CD14-positive monocyte (primary cell): ENCODE measurements at regions of chr11 and their contacts with region 1.

Region 1: DNA sequence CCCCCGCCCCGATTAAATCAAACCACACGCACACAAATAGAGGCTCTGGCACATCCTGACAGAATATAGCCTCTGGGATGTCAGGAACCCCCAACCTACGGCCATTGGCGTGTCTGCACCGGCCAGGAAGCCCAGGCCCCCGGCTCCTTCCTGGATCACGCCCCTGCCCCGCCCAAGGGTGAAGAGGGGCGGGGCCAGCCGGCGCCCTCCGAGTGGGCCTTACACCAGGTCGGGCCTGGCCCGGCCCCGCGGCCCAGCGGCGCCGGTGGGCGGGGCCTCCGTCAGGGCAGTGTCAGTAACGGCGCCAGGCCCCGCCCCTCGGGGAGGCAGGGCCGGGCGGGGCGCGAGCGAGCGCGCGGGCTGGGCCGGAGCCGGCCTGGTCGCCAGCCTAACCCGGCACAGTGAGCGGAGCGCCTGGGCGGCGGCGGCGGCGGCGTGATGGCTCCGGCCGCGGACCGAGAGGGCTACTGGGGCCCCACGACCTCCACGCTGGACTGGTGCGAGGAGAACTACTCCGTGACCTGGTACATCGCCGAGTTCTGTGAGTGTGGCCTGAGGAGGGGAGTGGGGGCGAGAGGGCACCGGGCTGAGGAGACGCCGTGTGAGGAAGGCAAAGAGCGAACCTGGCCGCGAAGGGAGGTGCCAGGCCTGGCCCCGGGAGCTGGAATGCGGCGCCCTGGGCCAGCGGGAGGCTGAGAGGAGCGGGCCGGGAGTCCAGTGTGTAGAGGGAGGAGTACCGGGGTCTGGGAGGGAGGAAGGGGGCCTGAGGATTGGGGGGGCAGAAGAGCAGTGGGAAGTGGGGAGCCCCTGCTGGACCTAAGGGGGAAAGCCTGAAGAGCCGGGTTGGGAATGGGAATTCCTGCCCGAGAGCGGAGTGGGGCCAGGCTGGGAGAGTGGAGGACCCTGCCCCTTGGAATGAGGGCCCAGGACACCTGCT is at the start of gene ACER3:
- DNase-seq: peak; percentile 85 to 93 (median 89)
- H3K4me3 ChIP-seq: peak within 1 kb of the TSS; percentile 93 to 98 (median 97)
- H3K4me3 Mint-ChIP-seq: peak within 1 kb of the TSS; percentile 90 to 97
- H3K27ac ChIP-seq: peak within 1 kb of the TSS; percentile 88 to 93
- H3K27ac Mint-ChIP-seq: peak within 1 kb of the TSS; percentile 88 to 97 (median 96)
- H3K4me1 ChIP-seq: peaks cover 79 to 87% of the 10 kb centered on the region in 2 donors
- H3K4me1 Mint-ChIP-seq: peaks cover 73% of the 10 kb centered on the region
- H3K27me3 ChIP-seq: no peaks in the 10 kb centered on the region
- H3K27me3 Mint-ChIP-seq: no peaks in the 10 kb centered on the region
- CTCF ChIP-seq: no peak
- polyA plus RNA-seq, gene ACER3: 22.9 to 45.4 (median 23.6) TPM

Region 2: GRCh38 chr11:76807206-76807875 is 53.5 kb before region 1 on chr11:
- intact Hi-C with region 1: loop called in 1 of 2 experiments (anchors 10 kb)
- DNase-seq: peak; percentile 56 to 74 (median 72)
- H3K4me3 ChIP-seq: no peak overlapping the region
- H3K4me3 Mint-ChIP-seq: peak overlapping the region in 1 of 2 donors; percentile 63
- H3K27ac ChIP-seq: no peak overlapping the region
- H3K27ac Mint-ChIP-seq: peak overlapping the region in 1 of 7 donors; percentile 56
- H3K4me1 ChIP-seq: peaks cover 8 to 9% of the 10 kb centered on the region in 2 donors
- H3K4me1 Mint-ChIP-seq: peaks cover 12% of the 10 kb centered on the region
- H3K27me3 ChIP-seq: no peaks in the 10 kb centered on the region
- H3K27me3 Mint-ChIP-seq: peaks cover 7 to 39% (median 18%) of the 10 kb centered on the region in 3 donors
- CTCF ChIP-seq: peak; percentile 91

Region 3: GRCh38 chr11:76823481-76824078 is 37.2 kb before region 1 on chr11:
- intact Hi-C with region 1: loop called (anchors 5 to 10 kb)
- DNase-seq: peak; percentile 18 to 89 (median 78)
- H3K4me3 ChIP-seq: peak overlapping the region in 1 of 3 experiments; percentile 35
- H3K4me3 Mint-ChIP-seq: peak overlapping the region in 1 of 2 donors; percentile 69
- H3K27ac ChIP-seq: peak overlapping the region; percentile 32 to 55
- H3K27ac Mint-ChIP-seq: peak overlapping the region; percentile 48 to 91 (median 87)
- H3K4me1 ChIP-seq: peaks cover 42 to 45% of the 10 kb centered on the region in 2 donors
- H3K4me1 Mint-ChIP-seq: peaks cover 52% of the 10 kb centered on the region
- H3K27me3 ChIP-seq: no peaks in the 10 kb centered on the region
- H3K27me3 Mint-ChIP-seq: peaks cover 0 to 1% (median 0%) of the 10 kb centered on the region in 3 donors
- CTCF ChIP-seq: no peak

Region 4: GRCh38 chr11:76903329-76903728 is 42.5 kb after region 1 on chr11:
- intact Hi-C with region 1: no loop called
- DNase-seq: no peak
- H3K4me3 ChIP-seq: no peak overlapping the region
- H3K4me3 Mint-ChIP-seq: no peak overlapping the region
- H3K27ac ChIP-seq: no peak overlapping the region
- H3K27ac Mint-ChIP-seq: no peak overlapping the region
- H3K4me1 ChIP-seq: no peaks in the 10 kb centered on the region
- H3K4me1 Mint-ChIP-seq: peaks cover 19% of the 10 kb centered on the region
- H3K27me3 ChIP-seq: no peaks in the 10 kb centered on the region
- H3K27me3 Mint-ChIP-seq: no peaks in the 10 kb centered on the region
- CTCF ChIP-seq: no peak

Region 5: GRCh38 chr11:76935042-76935441 is 74.2 kb after region 1 on chr11:
- intact Hi-C with region 1: no loop called
- DNase-seq: no peak
- H3K4me3 ChIP-seq: no peak overlapping the region
- H3K4me3 Mint-ChIP-seq: no peak overlapping the region
- H3K27ac ChIP-seq: no peak overlapping the region
- H3K27ac Mint-ChIP-seq: no peak overlapping the region
- H3K4me1 ChIP-seq: no peaks in the 10 kb centered on the region
- H3K4me1 Mint-ChIP-seq: no peaks in the 10 kb centered on the region
- H3K27me3 ChIP-seq: no peaks in the 10 kb centered on the region
- H3K27me3 Mint-ChIP-seq: peaks cover 0 to 1% (median 0%) of the 10 kb centered on the region in 3 donors
- CTCF ChIP-seq: no peak